H1 (cell line): ENCODE measurements at regions of chr3 and their contacts with region 1.

Region 1: GRCh38 chr3:39406368-39407258 is at the start of gene RPSA:
- DNase-seq: peak; percentile 93 to 96
- H3K4me3 ChIP-seq: peak within 1 kb of the TSS; percentile 68 to 94 (median 86)
- H3K27ac ChIP-seq: peak within 1 kb of the TSS; percentile 95
- H3K4me1 ChIP-seq: peaks cover 10 to 14% (median 11%) of the 10 kb centered on the region in 4 experiments
- H3K27me3 ChIP-seq: no peaks in the 10 kb centered on the region
- CTCF ChIP-seq: peak in 2 of 3 experiments; percentile 21 to 52; a peak in 3 of 4 replicates
- EP300 ChIP-seq: peak in 1 of 2 experiments; percentile 35; a peak in 1 of 3 replicates
- POLR2A ChIP-seq: peak; percentile 97 to 99
- RAD21 ChIP-seq: peak; percentile 62
- total RNA-seq, gene RPSA: 2,661 and 2,701 TPM in 2 replicates

Region 2: DNA sequence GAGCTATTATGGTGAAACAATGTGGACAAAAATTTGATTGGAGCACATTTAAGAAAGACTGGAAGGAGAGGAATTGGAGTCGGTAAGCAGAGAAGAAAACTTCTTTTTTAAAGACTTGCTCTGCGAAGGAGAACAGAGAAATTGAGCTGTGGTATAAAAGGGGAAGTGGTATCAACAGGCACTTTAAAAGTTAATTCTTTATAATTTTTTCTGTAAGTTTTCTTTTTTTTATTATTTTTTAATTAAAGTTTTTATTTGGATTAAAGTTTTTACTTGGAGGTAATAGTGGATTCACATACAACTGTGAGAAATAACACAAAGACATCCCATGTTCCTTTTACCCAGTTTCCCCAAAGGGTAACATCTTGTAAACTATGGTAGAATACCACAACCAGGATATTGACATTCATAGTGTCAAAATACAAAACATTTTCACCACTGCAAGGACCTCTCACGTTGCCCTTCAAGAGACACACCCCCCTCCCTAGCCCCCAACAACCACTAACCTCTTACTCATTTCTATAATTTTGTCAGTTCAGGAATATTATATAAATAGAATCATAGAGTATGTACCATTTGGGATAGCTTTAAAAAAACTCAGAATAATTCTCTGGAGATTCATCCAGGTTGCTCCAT is 180.4 kb before region 1 on chr3:
- CTCF ChIA-PET with region 1: no interaction called
- POLR2A ChIA-PET with region 1: no interaction called
- DNase-seq: no peak
- H3K4me3 ChIP-seq: no peak overlapping the region
- H3K27ac ChIP-seq: no peak overlapping the region
- H3K4me1 ChIP-seq: no peaks in the 10 kb centered on the region
- H3K27me3 ChIP-seq: no peaks in the 10 kb centered on the region
- CTCF ChIP-seq: no peak
- EP300 ChIP-seq: no peak
- POLR2A ChIP-seq: no peak
- RAD21 ChIP-seq: no peak

Region 3: DNA sequence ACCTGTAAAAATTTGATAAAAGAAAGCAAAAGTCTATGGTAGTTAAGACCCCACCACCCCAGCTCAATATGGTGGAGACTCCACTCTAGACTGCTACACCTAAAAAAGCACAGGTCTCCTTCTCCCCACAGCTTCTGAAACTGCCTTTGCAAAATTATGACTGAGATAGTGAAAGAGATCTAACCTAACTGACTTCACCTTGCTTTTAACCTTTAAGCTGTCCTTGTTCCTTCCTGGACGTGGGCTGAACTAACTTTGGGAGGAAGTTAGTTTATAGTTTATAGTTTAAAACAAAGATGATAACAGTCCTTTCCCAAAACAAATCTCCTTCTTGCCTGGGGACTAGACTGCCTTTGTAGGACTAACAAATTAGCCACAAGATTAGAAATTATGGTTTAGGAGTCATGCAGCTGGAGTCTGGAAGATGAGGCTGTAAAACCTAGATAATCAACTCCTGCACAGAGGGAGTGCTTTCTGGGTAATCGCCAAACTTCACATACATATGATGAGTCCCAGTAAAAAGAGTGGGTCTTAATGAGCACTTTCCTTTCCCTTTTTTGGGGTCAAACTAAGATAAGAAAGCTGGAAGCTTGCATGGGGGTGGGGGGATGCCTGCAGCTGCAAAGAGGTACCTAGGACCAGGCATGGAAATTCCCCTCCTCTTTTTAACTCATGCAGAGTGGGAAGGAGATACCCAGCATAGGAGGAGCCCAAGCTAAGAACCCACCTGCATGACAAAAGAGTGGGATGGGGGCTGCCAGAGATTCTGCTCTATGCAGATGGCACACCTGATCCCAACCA is 59.6 kb before region 1 on chr3:
- CTCF ChIA-PET with region 1: no interaction called
- POLR2A ChIA-PET with region 1: interaction called, 12 read pairs
- DNase-seq: no peak
- H3K4me3 ChIP-seq: no peak overlapping the region
- H3K27ac ChIP-seq: no peak overlapping the region
- H3K4me1 ChIP-seq: peaks cover 0 to 4% (median 1%) of the 10 kb centered on the region in 4 experiments; a peak in 2 of 7 replicates
- H3K27me3 ChIP-seq: no peaks in the 10 kb centered on the region
- CTCF ChIP-seq: no peak
- EP300 ChIP-seq: no peak
- POLR2A ChIP-seq: no peak
- RAD21 ChIP-seq: no peak

Region 4: DNA sequence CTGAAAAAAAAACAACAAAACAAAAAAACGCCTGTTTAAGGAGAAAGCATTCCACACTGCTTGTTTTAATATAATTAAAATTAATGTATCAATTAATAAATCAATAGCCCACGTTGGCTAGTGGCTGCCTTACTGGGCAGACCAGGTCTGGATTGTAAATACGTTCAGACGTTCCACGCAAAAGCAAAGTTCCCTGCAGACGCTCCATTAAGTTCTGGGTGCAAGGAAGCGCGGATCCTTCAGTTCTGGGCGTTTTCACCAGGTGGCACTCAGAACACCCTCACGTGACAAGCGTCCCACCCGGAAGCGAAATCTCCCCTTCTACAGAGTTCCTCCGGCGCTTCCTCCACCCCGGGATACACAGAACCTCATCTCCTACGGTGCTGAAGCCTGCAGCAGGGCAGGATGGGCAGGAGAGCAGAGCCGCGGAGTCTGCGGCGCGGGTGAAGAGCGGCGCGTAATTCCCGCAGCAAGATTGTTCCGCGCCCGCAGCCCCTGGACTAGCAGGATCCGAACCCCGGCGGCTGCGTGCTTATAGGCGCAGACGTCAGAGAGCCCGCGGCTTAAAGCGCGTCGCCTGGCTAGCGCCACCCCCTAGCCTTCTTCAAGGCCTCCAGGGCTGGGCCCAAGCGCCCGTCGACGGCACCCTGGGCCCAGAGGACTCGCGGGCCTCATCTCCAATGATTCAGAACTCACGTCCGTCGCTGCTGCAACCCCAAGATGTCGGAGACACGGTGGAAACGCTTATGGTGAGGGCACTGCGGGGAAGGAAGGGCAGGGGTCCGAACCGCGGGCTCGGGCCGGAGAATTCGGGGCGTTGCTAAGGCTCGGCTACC is 23.4 kb before region 1 on chr3 and contains the start of gene SLC25A38:
- CTCF ChIA-PET with region 1: interaction called, 10 read pairs
- POLR2A ChIA-PET with region 1: interaction called, 771 read pairs
- DNase-seq: peak; percentile 56 to 81
- H3K4me3 ChIP-seq: peak within 1 kb of the TSS; percentile 68 to 93 (median 86)
- H3K27ac ChIP-seq: peak within 1 kb of the TSS; percentile 90
- H3K4me1 ChIP-seq: peaks cover 3 to 6% (median 5%) of the 10 kb centered on the region in 4 experiments; a peak in 6 of 7 replicates
- H3K27me3 ChIP-seq: no peaks in the 10 kb centered on the region
- CTCF ChIP-seq: peak in 2 of 3 experiments; percentile 40 to 44; a peak in 2 of 4 replicates
- EP300 ChIP-seq: no peak
- POLR2A ChIP-seq: peak in 1 of 2 experiments; percentile 44; a peak in 2 of 3 replicates
- RAD21 ChIP-seq: peak in 1 of 2 experiments; percentile 20; a peak in 1 of 4 replicates
- total RNA-seq, gene SLC25A38: 37.3 and 41.2 TPM in 2 replicates

Region 5: GRCh38 chr3:39423436-39423970 is 16.9 kb after region 1 on chr3:
- CTCF ChIA-PET with region 1: interaction called, 3 read pairs
- POLR2A ChIA-PET with region 1: interaction called, 771 read pairs
- DNase-seq: no peak
- H3K4me3 ChIP-seq: no peak overlapping the region
- H3K27ac ChIP-seq: no peak overlapping the region
- H3K4me1 ChIP-seq: peaks cover 0 to 3% (median 0%) of the 10 kb centered on the region in 4 experiments; a peak in 2 of 7 replicates
- H3K27me3 ChIP-seq: no peaks in the 10 kb centered on the region
- CTCF ChIP-seq: no peak
- EP300 ChIP-seq: no peak
- POLR2A ChIP-seq: no peak
- RAD21 ChIP-seq: no peak

Region 6: GRCh38 chr3:39434574-39434973 is 28.0 kb after region 1 on chr3:
- CTCF ChIA-PET with region 1: no interaction called
- POLR2A ChIA-PET with region 1: interaction called, 141 read pairs
- DNase-seq: no peak
- H3K4me3 ChIP-seq: no peak overlapping the region
- H3K27ac ChIP-seq: no peak overlapping the region; the same call in 1 of the 2 replicates
- H3K4me1 ChIP-seq: no peaks in the 10 kb centered on the region
- H3K27me3 ChIP-seq: no peaks in the 10 kb centered on the region
- CTCF ChIP-seq: no peak
- EP300 ChIP-seq: no peak
- POLR2A ChIP-seq: no peak
- RAD21 ChIP-seq: no peak

Region 7: DNA sequence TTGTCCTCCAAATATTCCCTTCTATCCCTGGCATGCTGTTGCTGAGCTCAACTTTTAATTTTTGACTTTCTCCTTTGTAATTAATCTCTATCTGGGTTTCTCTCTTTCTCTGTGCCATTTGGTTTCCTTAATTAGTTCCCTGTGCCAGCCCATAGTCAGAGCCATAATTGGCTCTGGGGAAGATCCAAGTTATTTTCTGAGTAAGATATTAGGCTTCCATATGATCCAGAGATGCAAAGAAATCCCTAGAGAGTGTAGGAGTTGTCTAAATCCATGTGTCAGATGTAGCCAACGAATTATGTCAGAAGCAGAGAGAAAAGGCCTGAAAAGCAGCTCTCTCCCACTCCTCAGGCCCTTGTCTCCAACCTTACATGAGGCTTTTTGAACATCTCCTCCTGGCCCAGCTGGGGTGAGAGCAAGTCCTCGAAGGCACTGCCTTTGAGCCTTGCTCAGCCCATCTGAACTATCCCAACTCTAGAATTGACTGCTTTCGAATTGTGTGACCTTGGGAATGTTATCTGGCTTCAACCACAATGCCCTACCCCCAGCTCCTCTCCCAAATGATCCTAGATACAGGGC is 107.3 kb after region 1 on chr3:
- CTCF ChIA-PET with region 1: no interaction called
- POLR2A ChIA-PET with region 1: no interaction called
- DNase-seq: no peak
- H3K4me3 ChIP-seq: no peak overlapping the region
- H3K27ac ChIP-seq: no peak overlapping the region
- H3K4me1 ChIP-seq: peaks cover 0 to 3% (median 1%) of the 10 kb centered on the region in 4 experiments; a peak in 3 of 7 replicates
- H3K27me3 ChIP-seq: no peaks in the 10 kb centered on the region
- CTCF ChIP-seq: no peak
- EP300 ChIP-seq: no peak
- POLR2A ChIP-seq: no peak
- RAD21 ChIP-seq: no peak